ENCODE measurements at regions of chr3 and their contacts with region 1.

Region 1: GRCh38 chr3:122679085-122679881 is 1.4 kb upstream of the PARP14 start:
- DNase-seq: peak; percentile 91
- ATAC-seq: peak; percentile 69
- H3K4me3 Mint-ChIP-seq: peak overlapping the region; percentile 95
- H3K27ac Mint-ChIP-seq: peak overlapping the region; percentile 97
- H3K4me1 Mint-ChIP-seq: peaks cover 51% of the 10 kb centered on the region
- H3K27me3 Mint-ChIP-seq: no peaks in the 10 kb centered on the region

Region 2: DNA sequence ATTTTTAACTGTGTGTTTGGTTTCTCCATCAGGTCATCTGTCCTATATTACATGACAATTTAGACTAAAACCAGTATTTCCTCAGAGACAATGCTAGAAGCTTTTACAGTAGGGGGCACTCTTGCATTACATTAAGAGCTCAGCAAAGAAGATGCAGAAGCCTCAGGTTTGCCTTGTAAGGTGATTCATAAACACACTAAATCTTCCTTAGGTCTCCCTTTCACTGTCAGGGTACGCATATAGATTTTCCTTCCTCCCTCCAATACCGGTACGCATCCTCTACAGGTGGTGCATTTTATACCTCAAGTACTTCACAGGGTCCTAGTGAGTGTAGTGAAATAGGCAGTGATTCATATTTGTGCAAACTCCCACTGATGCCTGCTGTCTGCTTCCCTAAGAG is 577.6 kb before region 1 on chr3:
- CTCF ChIA-PET with region 1: interaction called, 3 read pairs
- POLR2A ChIA-PET with region 1: no interaction called
- intact Hi-C with region 1: loop called in 1 of 2 experiments (anchors 5 kb)
- DNase-seq: no peak
- ATAC-seq: peak; percentile 54
- H3K4me3 Mint-ChIP-seq: peak overlapping the region; percentile 60
- H3K27ac Mint-ChIP-seq: peak overlapping the region; percentile 79
- H3K4me1 Mint-ChIP-seq: peaks cover 42% of the 10 kb centered on the region
- H3K27me3 Mint-ChIP-seq: no peaks in the 10 kb centered on the region

Region 3: GRCh38 chr3:122415720-122416654 is 263.3 kb before region 1 on chr3 and contains the start of gene WDR5B:
- CTCF ChIA-PET with region 1: interaction called, 10 read pairs
- POLR2A ChIA-PET with region 1: interaction called, 7 read pairs
- intact Hi-C with region 1: loop called (anchors 1 kb)
- DNase-seq: peak; percentile 99
- ATAC-seq: peak; percentile 91
- H3K4me3 Mint-ChIP-seq: peak within 1 kb of the TSS; percentile 96
- H3K27ac Mint-ChIP-seq: peak within 1 kb of the TSS; percentile 96
- H3K4me1 Mint-ChIP-seq: peaks cover 46% of the 10 kb centered on the region
- H3K27me3 Mint-ChIP-seq: no peaks in the 10 kb centered on the region
- total RNA-seq, gene WDR5B: 2.6 to 2.8 TPM

Region 4: GRCh38 chr3:122533931-122534334 is 145.3 kb before region 1 on chr3:
- CTCF ChIA-PET with region 1: interaction called, 4 read pairs
- POLR2A ChIA-PET with region 1: no interaction called
- intact Hi-C with region 1: loop called in 1 of 2 experiments (anchors 1 kb)
- DNase-seq: peak; percentile 67
- ATAC-seq: peak; percentile 99
- H3K4me3 Mint-ChIP-seq: no peak overlapping the region
- H3K27ac Mint-ChIP-seq: no peak overlapping the region
- H3K4me1 Mint-ChIP-seq: peaks cover 34% of the 10 kb centered on the region
- H3K27me3 Mint-ChIP-seq: no peaks in the 10 kb centered on the region

Region 5: GRCh38 chr3:122609798-122610559 is 69.3 kb before region 1 on chr3:
- CTCF ChIA-PET with region 1: interaction called, 5 read pairs
- POLR2A ChIA-PET with region 1: no interaction called
- intact Hi-C with region 1: loop called (anchors 1 to 2 kb)
- DNase-seq: peak; percentile 27
- ATAC-seq: peak; percentile 95
- H3K4me3 Mint-ChIP-seq: peak overlapping the region; percentile 25
- H3K27ac Mint-ChIP-seq: peak overlapping the region; percentile 85
- H3K4me1 Mint-ChIP-seq: peaks cover 24% of the 10 kb centered on the region
- H3K27me3 Mint-ChIP-seq: no peaks in the 10 kb centered on the region

Region 6: GRCh38 chr3:122697952-122698620 is 18.8 kb after region 1 on chr3:
- CTCF ChIA-PET with region 1: interaction called, 11 read pairs
- POLR2A ChIA-PET with region 1: interaction called, 3 read pairs
- intact Hi-C with region 1: no loop called
- DNase-seq: peak; percentile 12
- ATAC-seq: no peak
- H3K4me3 Mint-ChIP-seq: no peak overlapping the region
- H3K27ac Mint-ChIP-seq: no peak overlapping the region
- H3K4me1 Mint-ChIP-seq: peaks cover 3% of the 10 kb centered on the region
- H3K27me3 Mint-ChIP-seq: no peaks in the 10 kb centered on the region